GM12878 (cell line): ENCODE measurements at regions of chrX and their contacts with region 1.

Region 1: DNA sequence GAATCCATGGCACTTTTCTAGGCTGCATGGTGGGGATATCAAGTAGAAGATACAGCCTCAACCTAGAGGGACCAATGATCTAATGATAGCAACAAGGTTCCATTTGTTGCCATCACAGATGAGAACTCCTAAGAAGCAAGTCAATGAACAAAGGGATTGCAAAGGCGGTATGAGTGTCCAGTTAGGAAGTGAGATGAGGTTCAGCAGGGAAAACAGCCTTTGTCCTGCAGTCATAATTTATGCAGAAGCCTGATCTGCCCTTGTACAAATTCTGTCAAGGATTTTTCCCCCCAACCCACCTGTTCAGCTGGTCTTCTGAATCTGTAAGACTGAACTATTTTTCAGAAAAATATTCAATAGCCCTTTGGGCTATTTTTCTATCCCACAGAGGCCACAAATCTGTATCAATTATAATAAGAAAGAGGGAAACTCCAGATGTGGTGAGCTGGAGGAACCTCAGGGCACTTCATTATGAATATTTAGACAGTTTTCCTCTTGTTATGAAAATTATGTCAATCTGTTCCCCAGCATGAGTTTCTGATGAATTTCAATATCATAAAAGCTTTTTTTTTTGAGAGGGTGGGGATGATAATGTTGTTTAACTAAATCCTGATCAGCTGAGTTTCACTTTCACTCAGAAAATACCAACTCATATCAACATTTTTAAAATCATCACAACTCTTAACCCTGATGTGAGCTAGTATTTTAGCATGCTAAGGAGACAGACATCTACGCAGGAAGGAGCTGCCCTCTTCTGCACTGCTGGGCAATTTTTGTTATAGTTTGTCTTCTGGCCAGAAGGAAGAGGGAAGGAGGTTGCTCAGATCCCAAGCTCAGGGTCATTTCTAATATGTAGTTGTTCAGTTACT is 127.2 kb upstream of the MAP3K15 start:
- DNase-seq: no peak
- ATAC-seq: peak; percentile 59
- H3K4me3 ChIP-seq: no peak overlapping the region
- H3K27ac ChIP-seq: peak overlapping the region; percentile 34; the same call in 1 of the 2 replicates
- H3K4me1 ChIP-seq: peaks cover 6% of the 10 kb centered on the region
- H3K27me3 ChIP-seq: no peaks in the 10 kb centered on the region
- CTCF ChIP-seq: no peak
- EP300 ChIP-seq: no peak
- POLR2A ChIP-seq: no peak
- RAD21 ChIP-seq: no peak

Region 2: GRCh38 chrX:19613645-19614323 is 28.7 kb before region 1 on chrX:
- CTCF ChIA-PET with region 1: no interaction called
- POLR2A ChIA-PET with region 1: interaction called, 7 read pairs
- RAD21 ChIA-PET with region 1: no interaction called
- SMC1A ChIA-PET with region 1: interaction called, 10 read pairs
- in situ Hi-C with region 1: no loop called
- intact Hi-C with region 1: no loop called
- DNase-seq: no peak
- ATAC-seq: no peak
- H3K4me3 ChIP-seq: no peak overlapping the region
- H3K27ac ChIP-seq: no peak overlapping the region
- H3K4me1 ChIP-seq: peaks cover 18% of the 10 kb centered on the region
- H3K27me3 ChIP-seq: no peaks in the 10 kb centered on the region
- CTCF ChIP-seq: no peak
- EP300 ChIP-seq: no peak
- POLR2A ChIP-seq: no peak
- RAD21 ChIP-seq: no peak